ENCODE measurements at regions of chr7 and their contacts with region 1.

Region 1: DNA sequence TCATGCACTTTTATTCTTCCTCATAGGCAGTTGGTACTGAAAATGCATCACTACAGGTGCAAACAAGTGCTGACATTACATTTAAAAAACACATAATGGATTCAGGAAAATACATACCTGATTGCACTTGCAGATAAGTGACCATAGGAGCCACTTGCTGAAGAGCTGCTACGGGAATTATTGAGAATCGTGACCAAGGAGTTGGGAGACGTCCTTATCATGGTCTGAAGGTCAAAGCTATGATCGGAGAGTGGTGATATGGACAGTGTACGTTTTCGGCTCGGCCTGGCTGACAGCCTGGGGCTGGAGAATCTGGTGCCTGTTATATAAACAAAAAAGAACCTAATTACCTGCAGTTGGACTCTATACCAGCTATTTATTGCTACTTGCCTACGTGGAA is 197.1 kb downstream of the GLI3 start:
- DNase-seq: no peak
- ATAC-seq: no peak
- H3K4me3 ChIP-seq: no peak overlapping the region
- H3K4me3 Mint-ChIP-seq: no peak overlapping the region
- H3K27ac ChIP-seq: no peak overlapping the region
- H3K27ac Mint-ChIP-seq: no peak overlapping the region
- H3K4me1 ChIP-seq: no peaks in the 10 kb centered on the region
- H3K4me1 Mint-ChIP-seq: no peaks in the 10 kb centered on the region
- H3K27me3 ChIP-seq: no peaks in the 10 kb centered on the region
- H3K27me3 Mint-ChIP-seq: peaks cover 11% of the 10 kb centered on the region
- CTCF ChIP-seq: no peak

Region 2: GRCh38 chr7:40717242-40717641 is 1322.7 kb before region 1 on chr7:
- CTCF ChIA-PET with region 1: no interaction called
- POLR2A ChIA-PET with region 1: no interaction called
- intact Hi-C with region 1: loop called in 1 of 2 experiments (anchors 5 kb)
- DNase-seq: no peak
- ATAC-seq: no peak
- H3K4me3 ChIP-seq: no peak overlapping the region
- H3K4me3 Mint-ChIP-seq: no peak overlapping the region
- H3K27ac ChIP-seq: no peak overlapping the region
- H3K27ac Mint-ChIP-seq: no peak overlapping the region
- H3K4me1 ChIP-seq: no peaks in the 10 kb centered on the region
- H3K4me1 Mint-ChIP-seq: no peaks in the 10 kb centered on the region
- H3K27me3 ChIP-seq: no peaks in the 10 kb centered on the region
- H3K27me3 Mint-ChIP-seq: no peaks in the 10 kb centered on the region
- CTCF ChIP-seq: no peak